Activated naive CD4-positive, alpha-beta T cell treated with anti-CD3 and anti-CD28 coated beads, Interleukin-2, amount 10 ng/mL, durations not matched to agents 7 days and 5 days (primary cell): ENCODE measurements at regions of chr4 and their contacts with region 1.

Region 1: GRCh38 chr4:4334798-4335520 is 44.9 kb downstream of the ZBTB49 start:
- DNase-seq: peak; percentile 82
- H3K4me3 Mint-ChIP-seq: no peak overlapping the region
- H3K27ac Mint-ChIP-seq: no peak overlapping the region
- H3K4me1 Mint-ChIP-seq: no peaks in the 10 kb centered on the region
- H3K27me3 Mint-ChIP-seq: peaks cover 12% of the 10 kb centered on the region

Region 2: GRCh38 chr4:4248029-4248884 is 86.7 kb before region 1 on chr4 and contains the start of gene TMEM128:
- CTCF ChIA-PET with region 1: interaction called, 39 read pairs
- DNase-seq: peak; percentile 95
- H3K4me3 Mint-ChIP-seq: peak within 1 kb of the TSS; percentile 76
- H3K27ac Mint-ChIP-seq: peak within 1 kb of the TSS; percentile 97
- H3K4me1 Mint-ChIP-seq: peaks cover 30% of the 10 kb centered on the region
- H3K27me3 Mint-ChIP-seq: peaks cover 13% of the 10 kb centered on the region

Region 3: DNA sequence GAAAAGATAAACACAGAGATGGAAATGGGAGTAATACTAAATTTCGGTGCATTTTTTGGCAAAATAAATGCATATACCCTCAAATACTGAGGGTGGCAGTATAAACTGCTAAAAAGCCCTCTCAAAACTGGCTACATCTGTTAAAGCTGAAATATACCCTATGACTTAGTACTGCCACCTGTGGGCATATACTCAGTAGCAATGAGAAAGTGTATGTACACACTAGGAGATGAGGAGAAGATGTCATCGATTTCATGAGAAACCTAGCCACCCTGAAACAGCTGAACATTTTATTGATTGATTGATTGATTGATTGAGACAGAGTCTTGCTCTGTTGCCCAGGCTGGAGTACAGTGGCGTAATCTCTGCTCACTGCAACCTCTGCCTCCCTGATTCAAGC is 74.7 kb before region 1 on chr4:
- CTCF ChIA-PET with region 1: interaction called, 17 read pairs
- DNase-seq: no peak
- H3K4me3 Mint-ChIP-seq: no peak overlapping the region
- H3K27ac Mint-ChIP-seq: no peak overlapping the region
- H3K4me1 Mint-ChIP-seq: no peaks in the 10 kb centered on the region
- H3K27me3 Mint-ChIP-seq: peaks cover 17% of the 10 kb centered on the region